Right cardiac atrium (tissue), 5 donors: ENCODE measurements at regions of chr2 and their contacts with region 1.

Region 1: DNA sequence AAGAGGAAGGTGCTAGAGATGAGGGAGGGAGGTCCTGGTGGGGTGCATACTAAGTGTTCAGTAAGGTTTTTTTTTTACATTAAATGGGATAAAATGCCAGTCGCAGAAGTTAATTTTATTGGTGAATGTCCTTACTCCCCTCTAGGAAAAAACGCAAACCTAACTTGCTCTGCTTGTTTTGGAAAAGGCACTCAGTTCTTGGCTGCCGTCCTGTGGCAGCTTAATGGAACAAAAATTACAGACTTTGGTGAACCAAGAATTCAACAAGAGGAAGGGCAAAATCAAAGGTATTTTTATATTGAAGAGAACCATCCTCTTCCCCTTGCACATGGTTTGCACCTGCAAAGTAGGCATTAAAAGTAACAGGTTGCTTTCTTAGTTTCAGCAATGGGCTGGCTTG is 12.7 kb upstream of the IL18R1 start:
- DNase-seq: peak in 1 of 3 donors; percentile 62
- ATAC-seq: peak in 1 of 2 donors; percentile 32
- H3K4me3 ChIP-seq: no peak overlapping the region
- H3K27ac ChIP-seq: no peak overlapping the region
- H3K4me1 ChIP-seq: no peaks in the 10 kb centered on the region
- H3K27me3 ChIP-seq: no peaks in the 10 kb centered on the region

Region 2: GRCh38 chr2:102251042-102251848 is 91.6 kb before region 1 on chr2:
- intact Hi-C with region 1: loop called in 1 of 4 experiments (anchors 10 kb)
- DNase-seq: peak; percentile 69 to 84 (median 79)
- ATAC-seq: peak; percentile 84 to 90
- H3K4me3 ChIP-seq: peak overlapping the region; percentile 41
- H3K27ac ChIP-seq: peak overlapping the region; percentile 28
- H3K4me1 ChIP-seq: no peaks in the 10 kb centered on the region
- H3K27me3 ChIP-seq: no peaks in the 10 kb centered on the region

Region 3: GRCh38 chr2:102268510-102269209 is 74.2 kb before region 1 on chr2:
- intact Hi-C with region 1: loop called in 1 of 4 experiments (anchors 10 kb)
- DNase-seq: no peak
- ATAC-seq: no peak
- H3K4me3 ChIP-seq: no peak overlapping the region
- H3K27ac ChIP-seq: no peak overlapping the region
- H3K4me1 ChIP-seq: no peaks in the 10 kb centered on the region
- H3K27me3 ChIP-seq: no peaks in the 10 kb centered on the region